ENCODE measurements at regions of chr10 and their contacts with region 1.

Region 1: GRCh38 chr10:47047671-47048525 is 136.7 kb downstream of the PTPN20 start:
- DNase-seq: no peak
- H3K4me3 ChIP-seq: no peak overlapping the region
- CTCF ChIP-seq: peak; percentile 92

Region 2: GRCh38 chr10:46325023-46325422 is 722.9 kb before region 1 on chr10:
- CTCF ChIA-PET with region 1: no interaction called
- POLR2A ChIA-PET with region 1: no interaction called
- DNase-seq: no peak
- H3K4me3 ChIP-seq: no peak overlapping the region
- CTCF ChIP-seq: peak; percentile 5

Region 3: DNA sequence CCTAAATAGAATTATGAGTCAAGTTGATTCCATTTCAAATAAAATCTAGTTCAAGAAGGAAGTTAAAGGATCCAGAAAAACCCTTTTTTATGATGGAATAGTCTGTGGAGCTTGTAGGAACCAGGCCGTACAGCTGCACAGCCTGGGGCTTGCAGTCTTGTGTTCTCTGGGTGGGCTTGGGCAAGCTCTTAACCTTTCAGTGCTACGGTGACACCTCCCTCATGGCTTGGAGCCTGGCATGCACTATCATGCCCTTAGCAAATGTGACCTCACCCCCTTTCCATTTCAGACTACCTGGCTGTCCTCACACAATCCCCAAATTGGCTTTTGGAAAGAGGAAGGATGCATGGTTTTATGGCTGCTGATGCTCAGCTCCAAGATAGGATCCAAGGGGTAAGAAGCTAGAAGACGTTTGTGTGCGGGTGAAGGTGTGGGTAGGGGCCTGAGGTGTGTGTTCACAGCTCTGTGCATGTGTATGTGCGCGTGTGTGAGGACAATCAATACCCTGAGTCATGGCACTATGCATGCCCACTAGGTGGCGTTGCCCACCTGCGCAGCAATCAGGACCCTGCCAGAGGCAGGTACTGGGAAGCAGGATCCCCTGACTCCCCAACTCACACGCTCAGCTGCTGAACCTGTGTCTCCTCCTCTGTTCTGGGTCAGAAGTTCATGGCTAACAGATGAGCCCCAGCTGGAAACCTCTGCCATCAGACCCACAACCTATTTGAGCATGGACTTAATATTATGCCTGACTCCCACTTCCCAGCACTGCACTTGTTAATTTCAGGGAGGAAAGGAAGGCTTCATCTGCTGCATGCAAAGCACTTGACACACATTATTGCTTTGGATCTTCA is 23.3 kb before region 1 on chr10:
- CTCF ChIA-PET with region 1: interaction called, 49 read pairs
- POLR2A ChIA-PET with region 1: no interaction called
- DNase-seq: no peak
- H3K4me3 ChIP-seq: no peak overlapping the region
- CTCF ChIP-seq: peak; percentile 86

Region 4: DNA sequence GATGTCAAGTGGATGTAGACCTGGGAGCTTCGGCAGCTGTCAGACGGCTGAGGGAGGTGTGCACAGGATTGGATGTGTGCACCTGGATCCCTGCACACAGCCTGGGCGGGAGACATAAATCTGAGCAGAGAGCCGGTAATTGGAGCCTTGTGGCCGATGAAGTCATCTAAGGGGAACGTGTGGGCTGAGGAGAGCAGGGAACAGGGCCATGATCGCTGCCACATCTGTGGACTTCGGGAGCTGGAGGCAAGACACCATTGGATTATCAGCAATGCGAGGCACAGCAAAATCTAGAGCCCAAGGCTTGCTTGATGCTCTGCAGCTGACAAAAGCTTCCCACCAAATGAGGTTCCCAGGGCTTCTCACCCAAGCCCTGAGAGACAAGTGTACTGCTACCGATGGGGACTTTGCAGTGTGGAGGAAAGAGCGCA is 11.1 kb after region 1 on chr10:
- CTCF ChIA-PET with region 1: interaction called, 26 read pairs
- POLR2A ChIA-PET with region 1: no interaction called
- DNase-seq: no peak
- H3K4me3 ChIP-seq: no peak overlapping the region
- CTCF ChIP-seq: no peak

Region 5: DNA sequence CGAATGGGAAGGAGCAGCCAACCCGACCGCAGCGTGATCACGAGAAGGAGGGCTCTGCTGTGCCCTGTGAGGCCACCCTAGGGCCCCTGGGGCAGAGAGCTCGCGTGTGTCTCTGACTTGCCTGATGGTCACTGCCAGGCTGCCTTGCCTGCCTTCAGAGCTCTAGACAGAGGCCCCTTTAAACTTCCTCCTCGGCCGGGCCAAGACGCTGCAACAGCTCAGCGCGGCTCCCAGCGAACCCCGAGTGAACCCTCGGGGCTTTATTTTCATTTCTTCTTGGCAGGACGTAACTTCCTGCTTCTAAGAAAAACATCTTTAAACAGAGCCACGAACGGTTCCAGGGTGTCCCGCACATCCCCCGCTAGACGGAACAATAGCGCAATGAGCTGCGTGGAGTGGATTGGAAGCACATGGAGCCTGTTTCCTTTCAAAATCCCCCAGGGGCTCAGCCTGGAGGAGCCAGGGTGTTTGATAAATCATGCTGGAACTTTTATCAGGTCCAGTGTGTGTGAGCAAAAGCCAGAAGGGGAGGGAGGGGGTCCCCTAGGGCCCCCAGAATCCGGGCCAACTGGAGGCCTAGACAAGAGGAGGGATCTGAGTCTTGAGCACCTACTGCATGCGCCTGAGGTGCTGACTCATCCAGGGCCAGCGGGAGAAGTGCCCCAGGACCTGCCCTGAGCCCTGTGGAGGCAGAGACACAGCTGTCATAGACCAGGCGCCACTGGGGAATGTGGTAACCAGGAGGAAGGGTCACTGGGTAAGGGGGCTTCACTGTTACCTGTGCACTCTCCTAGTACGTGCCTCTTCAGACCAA is 118.0 kb after region 1 on chr10:
- CTCF ChIA-PET with region 1: interaction called, 11 read pairs
- POLR2A ChIA-PET with region 1: no interaction called
- DNase-seq: no peak
- H3K4me3 ChIP-seq: peak overlapping the region; percentile 6; the same call in 1 of the 2 replicates
- CTCF ChIP-seq: no peak

Region 6: GRCh38 chr10:47306387-47307210 is 258.7 kb after region 1 on chr10:
- CTCF ChIA-PET with region 1: interaction called, 291 read pairs
- POLR2A ChIA-PET with region 1: no interaction called
- DNase-seq: no peak
- H3K4me3 ChIP-seq: no peak overlapping the region
- CTCF ChIP-seq: no peak

Region 7: DNA sequence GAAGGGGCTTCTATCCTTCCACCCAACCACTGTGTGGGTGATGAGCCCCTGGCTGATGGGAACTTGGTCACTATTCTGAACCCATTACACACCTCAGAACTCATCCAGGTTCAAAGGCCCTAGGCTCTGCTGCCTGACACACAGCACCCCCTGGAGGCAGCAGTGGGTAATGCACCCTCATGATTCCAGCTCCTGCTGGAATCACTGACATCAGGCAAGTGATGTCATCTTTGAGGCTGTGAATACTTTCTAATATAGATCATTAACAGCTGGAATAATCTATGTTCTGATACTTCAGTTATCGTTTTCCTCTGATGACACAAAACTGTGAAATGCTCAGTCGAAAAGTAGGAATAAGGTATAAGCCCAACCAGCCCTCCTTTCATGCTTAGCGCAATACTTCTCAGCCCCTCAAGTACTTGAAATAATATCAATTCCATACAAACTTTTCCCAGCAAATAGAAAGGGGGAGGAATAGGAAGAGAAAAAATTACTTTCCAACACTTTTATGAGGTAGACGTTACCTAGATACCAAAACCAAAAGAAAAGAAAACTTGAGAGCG is 292.8 kb after region 1 on chr10:
- CTCF ChIA-PET with region 1: interaction called, 11 read pairs
- POLR2A ChIA-PET with region 1: no interaction called
- DNase-seq: no peak
- H3K4me3 ChIP-seq: no peak overlapping the region
- CTCF ChIP-seq: peak; percentile 90

Measured in AG04449 (cell line).